Activated B cell treated with CpG ODN at 0.5 μM for 24 hours (primary cell): ENCODE measurements at regions of chr6 and their contacts with region 1.

Region 1: DNA sequence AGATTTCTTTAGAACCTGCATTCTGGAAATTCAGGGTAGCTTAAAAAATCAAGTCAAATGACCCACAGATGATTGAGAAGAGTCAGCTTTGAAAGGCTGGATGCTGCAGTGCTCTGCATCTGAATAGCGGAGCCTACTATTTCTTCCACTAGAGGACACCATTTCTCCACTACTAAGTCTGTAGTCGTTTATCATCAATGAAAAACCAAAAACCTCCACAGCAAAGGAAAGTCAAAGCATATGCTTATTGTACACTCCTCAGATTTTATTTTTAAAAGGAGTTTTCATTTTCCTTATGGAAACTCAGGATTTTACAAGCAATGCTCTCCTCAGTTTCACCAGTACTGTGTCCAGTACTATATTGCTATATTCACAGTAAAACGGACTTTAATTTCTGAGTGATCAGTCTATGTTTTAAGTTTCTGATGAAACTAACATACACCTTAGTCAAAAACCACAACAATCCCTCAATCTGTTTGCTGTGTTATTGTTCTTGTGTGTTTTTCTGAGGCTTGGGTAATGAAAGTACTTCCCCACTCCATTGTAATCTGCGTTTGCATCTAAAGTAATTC is 50.5 kb upstream of the ENPP5 start:
- DNase-seq: no peak
- ATAC-seq: peak; percentile 48
- H3K4me3 Mint-ChIP-seq: peak overlapping the region; percentile 73
- H3K27ac Mint-ChIP-seq: peak overlapping the region; percentile 93
- H3K4me1 Mint-ChIP-seq: peaks cover 59% of the 10 kb centered on the region
- H3K27me3 Mint-ChIP-seq: no peaks in the 10 kb centered on the region
- CTCF ChIP-seq: no peak

Region 2: DNA sequence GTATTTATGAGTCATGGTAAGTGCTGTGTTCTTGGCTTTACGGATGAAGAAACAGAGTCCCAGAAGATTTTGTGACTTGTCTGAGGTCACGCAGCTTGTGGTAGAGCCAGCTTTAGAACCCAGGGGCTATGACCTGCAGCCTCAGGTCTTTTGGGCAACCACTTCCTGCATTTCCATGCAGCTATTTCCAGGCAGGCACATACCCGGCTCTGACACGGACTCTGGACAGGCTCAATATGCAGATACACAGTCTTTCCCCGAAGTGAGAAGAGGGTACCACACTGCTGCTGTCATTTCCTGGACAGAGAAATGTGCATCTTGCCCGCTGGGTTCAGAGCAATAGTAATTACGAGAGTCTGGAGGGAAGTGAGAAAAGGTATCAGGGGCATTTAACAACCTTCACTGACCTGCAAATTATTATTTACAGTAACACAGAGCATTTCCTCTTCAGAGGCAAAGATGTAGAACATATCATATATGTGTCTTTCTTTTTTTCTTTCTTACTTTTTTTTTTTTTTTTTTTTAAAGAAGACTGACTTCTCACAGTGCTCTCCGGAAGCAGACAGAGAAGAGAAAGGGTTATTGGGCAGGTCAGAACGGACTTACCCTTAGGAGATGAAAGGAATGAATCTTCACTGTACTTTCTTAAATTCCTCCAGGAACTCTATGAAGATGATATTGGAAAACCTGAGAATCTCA is 390.7 kb before region 1 on chr6:
- CTCF ChIA-PET with region 1: no interaction called
- POLR2A ChIA-PET with region 1: no interaction called
- intact Hi-C with region 1: loop called (anchors 1 kb)
- DNase-seq: peak; percentile 50
- ATAC-seq: peak; percentile 86
- H3K4me3 Mint-ChIP-seq: peak overlapping the region; percentile 77
- H3K27ac Mint-ChIP-seq: peak overlapping the region; percentile 75
- H3K4me1 Mint-ChIP-seq: peaks cover 34% of the 10 kb centered on the region
- H3K27me3 Mint-ChIP-seq: peaks cover 7% of the 10 kb centered on the region
- CTCF ChIP-seq: no peak

Region 3: GRCh38 chr6:46090115-46091079 is 130.9 kb before region 1 on chr6:
- CTCF ChIA-PET with region 1: interaction called, 83 read pairs
- POLR2A ChIA-PET with region 1: interaction called, 12 read pairs
- intact Hi-C with region 1: loop called (anchors 1 kb)
- DNase-seq: peak; percentile 32
- ATAC-seq: peak; percentile 67
- H3K4me3 Mint-ChIP-seq: no peak overlapping the region
- H3K27ac Mint-ChIP-seq: no peak overlapping the region
- H3K4me1 Mint-ChIP-seq: peaks cover 5% of the 10 kb centered on the region
- H3K27me3 Mint-ChIP-seq: peaks cover 11% of the 10 kb centered on the region
- CTCF ChIP-seq: no peak

Region 4: DNA sequence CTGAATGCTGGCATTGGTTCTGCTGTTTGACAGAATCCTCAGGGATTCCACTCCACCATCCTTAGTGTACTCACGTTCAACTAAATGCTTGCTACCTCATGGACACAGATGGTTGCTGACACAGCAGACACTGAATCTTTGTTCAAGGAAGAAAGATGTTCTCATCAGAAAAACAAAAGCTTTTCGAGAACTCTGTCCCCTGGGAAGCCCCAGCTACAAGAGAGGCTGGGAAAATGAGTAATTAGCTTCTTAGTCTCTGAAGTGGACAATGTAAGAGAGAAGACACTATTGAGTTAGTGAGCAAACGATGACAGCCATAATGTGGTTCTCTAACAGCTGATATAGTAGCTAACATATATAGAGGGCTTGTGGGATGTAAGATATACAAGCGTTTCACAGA is 19.6 kb before region 1 on chr6:
- CTCF ChIA-PET with region 1: interaction called, 4 read pairs
- POLR2A ChIA-PET with region 1: no interaction called
- intact Hi-C with region 1: loop called (anchors 2 kb)
- DNase-seq: no peak
- ATAC-seq: no peak
- H3K4me3 Mint-ChIP-seq: no peak overlapping the region
- H3K27ac Mint-ChIP-seq: no peak overlapping the region
- H3K4me1 Mint-ChIP-seq: no peaks in the 10 kb centered on the region
- H3K27me3 Mint-ChIP-seq: no peaks in the 10 kb centered on the region
- CTCF ChIP-seq: no peak

Region 5: DNA sequence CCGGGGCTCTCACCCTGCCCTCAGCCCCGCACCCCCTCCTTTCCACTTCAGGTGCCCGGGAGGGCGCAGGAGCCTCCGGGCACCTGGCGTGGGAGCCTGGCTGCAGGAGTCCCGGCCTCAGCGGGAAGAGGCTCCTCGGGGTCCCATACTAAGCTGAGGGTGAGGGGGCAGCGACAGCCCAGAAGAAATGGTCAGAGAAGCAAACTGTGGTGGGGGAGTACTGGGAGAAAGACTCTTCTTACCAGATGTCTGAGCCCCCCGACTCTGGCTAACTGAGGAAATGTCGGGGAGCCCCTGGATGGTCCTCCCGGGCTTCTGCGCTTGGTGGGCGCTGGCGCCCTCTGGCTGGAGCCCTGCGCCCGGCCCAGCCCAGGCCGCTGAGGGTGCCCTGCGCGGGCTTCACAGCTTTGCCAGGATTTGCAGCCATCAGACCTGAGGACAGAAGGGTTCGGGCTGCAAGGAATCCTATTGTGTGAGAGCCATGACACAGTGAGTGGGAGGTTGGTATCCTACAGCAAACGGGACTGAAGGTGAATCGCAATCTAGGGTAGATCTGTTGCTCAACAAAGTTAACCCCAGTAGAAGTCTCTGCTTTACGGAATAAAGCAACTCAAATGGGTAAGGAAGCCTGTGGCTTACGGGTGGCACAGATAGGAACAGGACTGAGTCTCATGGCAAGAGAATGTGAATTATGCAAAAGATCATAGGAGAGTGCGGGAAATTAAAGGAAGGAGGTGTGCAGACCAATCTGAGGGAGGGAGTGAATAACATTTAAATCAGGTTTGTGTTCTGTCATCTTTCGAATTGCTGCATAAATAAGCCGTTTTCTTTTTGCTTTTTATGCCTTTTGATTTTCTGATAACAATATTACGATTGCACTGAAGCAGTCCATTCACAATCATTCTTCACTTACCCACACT is 270.6 kb after region 1 on chr6:
- CTCF ChIA-PET with region 1: interaction called, 4 read pairs
- POLR2A ChIA-PET with region 1: no interaction called
- intact Hi-C with region 1: loop called (anchors 2 kb)
- DNase-seq: no peak
- ATAC-seq: peak; percentile 53
- H3K4me3 Mint-ChIP-seq: peak overlapping the region; percentile 71
- H3K27ac Mint-ChIP-seq: no peak overlapping the region
- H3K4me1 Mint-ChIP-seq: peaks cover 10% of the 10 kb centered on the region
- H3K27me3 Mint-ChIP-seq: peaks cover 63% of the 10 kb centered on the region
- CTCF ChIP-seq: no peak

Region 6: GRCh38 chr6:46848684-46849360 is 627.5 kb after region 1 on chr6:
- CTCF ChIA-PET with region 1: no interaction called
- POLR2A ChIA-PET with region 1: no interaction called
- intact Hi-C with region 1: loop called (anchors 5 kb)
- DNase-seq: peak; percentile 46
- ATAC-seq: peak; percentile 57
- H3K4me3 Mint-ChIP-seq: peak overlapping the region; percentile 52
- H3K27ac Mint-ChIP-seq: no peak overlapping the region
- H3K4me1 Mint-ChIP-seq: peaks cover 5% of the 10 kb centered on the region
- H3K27me3 Mint-ChIP-seq: peaks cover 25% of the 10 kb centered on the region
- CTCF ChIP-seq: peak; percentile 35